GM10248 (cell line): ENCODE measurements at regions of chr1 and their contacts with region 1.

Region 1: DNA sequence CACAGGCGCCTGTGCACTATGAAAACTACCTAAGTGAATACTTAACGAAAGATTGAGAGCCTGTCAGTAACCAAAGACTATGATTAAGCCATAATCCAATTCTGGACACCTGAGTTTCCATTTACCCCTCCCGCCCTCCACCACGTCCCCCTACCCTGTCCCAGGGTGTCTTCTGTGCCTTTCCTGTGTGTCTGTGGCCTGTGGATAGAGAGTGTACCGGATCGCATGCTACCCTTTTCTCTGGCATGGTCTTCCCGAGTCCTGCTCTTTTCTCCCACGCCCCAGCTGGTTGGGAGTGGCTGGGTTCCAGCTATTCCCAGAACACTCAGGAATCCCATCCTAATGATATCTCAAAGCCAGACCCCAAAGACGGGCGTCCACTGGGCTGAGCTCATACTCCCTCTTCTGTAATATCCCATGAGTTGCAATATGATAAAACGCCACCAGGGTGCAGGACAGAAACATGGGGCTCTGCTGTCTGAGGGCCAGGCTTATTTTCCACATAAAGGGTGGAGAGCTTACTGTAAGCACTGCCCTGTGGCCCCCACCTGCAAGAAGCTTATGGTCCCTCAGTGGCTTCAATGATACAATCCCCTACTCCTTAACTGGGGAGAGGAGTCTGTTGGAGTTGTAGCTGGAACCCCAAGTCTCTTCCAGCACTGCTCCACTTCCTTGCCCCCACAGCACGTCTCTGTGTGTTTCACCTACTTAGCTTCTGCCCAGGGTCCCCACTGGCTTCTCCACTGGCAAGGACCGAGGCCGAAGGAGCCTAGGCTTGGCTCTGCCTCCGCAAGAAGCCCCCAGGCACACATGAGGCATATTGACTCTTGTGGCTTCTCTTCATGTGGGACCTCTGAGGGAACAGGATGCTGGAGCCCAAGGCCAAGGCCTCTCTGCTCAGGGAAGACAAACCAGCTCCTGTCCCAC is 17.6 kb upstream of the ALX3 start:
- DNase-seq: peak; percentile 78
- CTCF ChIP-seq: peak; percentile 71

Region 2: DNA sequence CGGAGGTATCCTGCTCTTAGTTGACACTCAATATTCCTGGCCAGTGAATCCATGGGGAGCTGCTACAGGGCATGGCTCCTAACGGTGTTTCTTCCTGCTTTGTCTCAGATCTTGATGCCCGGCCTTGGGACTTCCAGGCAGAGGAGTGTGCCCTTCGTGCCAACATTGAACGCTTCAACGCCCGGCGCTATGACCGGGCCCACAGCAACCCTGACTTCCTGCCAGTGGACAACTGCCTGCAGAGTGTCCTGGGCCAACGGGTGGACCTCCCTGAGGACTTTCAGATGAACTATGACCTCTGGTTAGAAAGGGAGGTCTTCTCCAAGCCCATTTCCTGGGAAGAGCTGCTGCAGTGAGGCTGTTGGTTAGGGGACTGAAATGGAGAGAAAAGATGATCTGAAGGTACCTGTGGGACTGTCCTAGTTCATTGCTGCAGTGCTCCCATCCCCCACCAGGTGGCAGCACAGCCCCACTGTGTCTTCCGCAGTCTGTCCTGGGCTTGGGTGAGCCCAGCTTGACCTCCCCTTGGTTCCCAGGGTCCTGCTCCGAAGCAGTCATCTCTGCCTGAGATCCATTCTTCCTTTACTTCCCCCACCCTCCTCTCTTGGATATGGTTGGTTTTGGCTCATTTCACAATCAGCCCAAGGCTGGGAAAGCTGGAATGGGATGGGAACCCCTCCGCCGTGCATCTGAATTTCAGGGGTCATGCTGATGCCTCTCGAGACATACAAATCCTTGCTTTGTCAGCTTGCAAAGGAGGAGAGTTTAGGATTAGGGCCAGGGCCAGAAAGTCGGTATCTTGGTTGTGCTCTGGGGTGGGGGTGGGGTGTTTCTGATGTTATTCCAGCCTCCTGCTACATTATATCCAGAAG is 34.3 kb before region 1 on chr1:
- CTCF ChIA-PET with region 1: interaction called, 34 read pairs
- POLR2A ChIA-PET with region 1: no interaction called
- DNase-seq: peak; percentile 80
- CTCF ChIP-seq: peak; percentile 90

Region 3: GRCh38 chr1:110060034-110060661 is 27.9 kb before region 1 on chr1:
- CTCF ChIA-PET with region 1: interaction called, 50 read pairs
- POLR2A ChIA-PET with region 1: no interaction called
- DNase-seq: peak; percentile 83
- CTCF ChIP-seq: peak; percentile 87

Region 4: DNA sequence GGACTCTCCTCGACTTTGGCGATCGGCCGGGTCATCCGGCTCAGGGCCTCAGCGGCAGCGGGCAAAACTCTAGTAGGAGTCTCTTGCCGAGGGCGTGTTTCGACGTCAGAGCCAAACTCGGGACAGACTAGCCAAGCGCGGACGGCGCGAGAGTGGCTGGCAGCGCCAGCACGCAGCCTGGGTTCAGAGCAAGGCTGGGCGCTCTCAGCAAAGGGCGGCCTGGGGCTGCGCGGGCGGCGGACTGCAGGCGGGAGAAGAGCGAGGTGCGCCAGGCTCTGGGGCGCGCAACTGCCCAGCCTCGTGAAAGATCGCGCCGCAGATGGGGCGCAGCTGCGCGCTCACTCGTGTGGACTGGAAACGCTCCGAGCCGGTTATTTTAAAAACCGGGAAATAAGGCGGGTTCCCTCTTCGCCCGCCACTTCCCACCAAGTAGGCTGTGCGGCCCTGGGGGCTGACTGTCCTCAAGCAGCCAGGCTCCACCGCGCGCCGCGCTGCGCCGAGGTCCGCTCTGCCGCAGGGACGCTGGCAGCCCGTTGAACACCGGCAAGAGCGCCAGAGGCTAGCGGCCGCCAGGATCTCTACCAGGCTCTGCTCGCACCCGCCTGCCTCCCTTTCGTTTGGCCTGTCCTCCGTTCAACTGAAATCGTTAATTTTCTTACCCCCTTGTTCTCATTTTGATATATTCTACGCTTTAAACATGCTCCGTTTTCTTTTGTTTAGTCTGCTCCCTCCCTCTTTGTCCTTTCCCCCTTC is 20.0 kb before region 1 on chr1:
- CTCF ChIA-PET with region 1: interaction called, 17 read pairs
- POLR2A ChIA-PET with region 1: no interaction called
- DNase-seq: no peak
- CTCF ChIP-seq: no peak

Region 5: GRCh38 chr1:110076789-110077500 is 11.1 kb before region 1 on chr1:
- CTCF ChIA-PET with region 1: interaction called, 43 read pairs
- POLR2A ChIA-PET with region 1: no interaction called
- DNase-seq: no peak
- CTCF ChIP-seq: no peak

Region 6: DNA sequence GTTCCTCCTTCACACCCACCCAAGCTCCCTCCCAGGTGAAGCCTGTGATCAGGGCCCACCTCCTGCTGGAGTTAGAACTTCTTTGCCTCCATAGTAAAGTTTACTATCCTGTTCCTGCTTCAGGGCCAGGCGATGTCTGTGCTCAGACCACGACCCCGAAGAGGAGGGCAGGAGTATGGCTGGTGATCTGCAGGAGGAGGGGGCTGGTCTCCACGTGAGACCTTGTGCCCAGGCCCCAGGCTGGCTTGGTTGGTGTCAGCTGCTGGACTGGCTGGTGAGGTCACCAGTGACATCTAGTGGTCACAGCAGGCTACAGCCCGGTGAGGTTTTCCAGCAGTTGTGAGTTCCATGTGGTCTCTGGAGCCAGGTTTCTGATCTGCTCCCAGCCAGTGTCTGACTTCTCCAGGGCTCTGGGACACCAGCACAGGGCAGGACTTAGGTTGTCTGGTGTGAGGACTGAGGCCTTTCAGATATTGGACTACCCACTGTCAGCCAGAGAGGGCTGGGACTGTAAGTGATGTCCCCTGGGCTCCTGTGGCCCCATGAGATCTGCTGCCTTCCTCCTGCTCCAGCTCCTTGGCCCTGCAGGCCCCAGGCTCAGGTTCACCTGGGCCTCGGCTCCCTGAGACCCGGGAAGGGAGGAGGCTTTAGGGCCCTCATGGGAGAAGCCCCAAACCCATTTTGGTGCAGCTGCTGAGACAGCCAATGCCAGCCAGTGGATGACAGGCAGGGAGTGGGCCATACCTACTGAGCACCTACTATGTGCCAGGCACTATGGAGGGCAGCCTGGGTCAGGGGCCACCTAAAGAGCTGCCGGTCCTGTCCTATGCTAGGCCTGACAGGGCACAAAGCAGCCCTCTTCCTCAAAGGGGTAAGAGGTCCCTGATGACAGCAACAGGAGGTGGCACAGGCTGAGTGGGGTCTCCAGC is 18.2 kb after region 1 on chr1:
- CTCF ChIA-PET with region 1: interaction called, 286 read pairs
- POLR2A ChIA-PET with region 1: interaction called, 3 read pairs
- DNase-seq: peak; percentile 85
- CTCF ChIP-seq: peak; percentile 96

Region 7: GRCh38 chr1:110118636-110119615 is 30.9 kb after region 1 on chr1:
- CTCF ChIA-PET with region 1: interaction called, 27 read pairs
- POLR2A ChIA-PET with region 1: no interaction called
- DNase-seq: no peak
- CTCF ChIP-seq: no peak

Region 8: GRCh38 chr1:110176299-110176956 is 88.4 kb after region 1 on chr1:
- CTCF ChIA-PET with region 1: no interaction called
- POLR2A ChIA-PET with region 1: no interaction called
- DNase-seq: no peak
- CTCF ChIP-seq: no peak

Region 9: GRCh38 chr1:110272045-110272444 is 184.0 kb after region 1 on chr1:
- CTCF ChIA-PET with region 1: no interaction called
- POLR2A ChIA-PET with region 1: no interaction called
- DNase-seq: no peak
- CTCF ChIP-seq: no peak